ENCODE measurements at regions of chr2 and their contacts with region 1.

Region 1: GRCh38 chr2:134453476-134453875 is 199.6 kb downstream of the MGAT5 start:
- DNase-seq: no peak
- H3K4me3 Mint-ChIP-seq: no peak overlapping the region
- H3K27ac Mint-ChIP-seq: no peak overlapping the region
- H3K4me1 Mint-ChIP-seq: no peaks in the 10 kb centered on the region
- H3K27me3 Mint-ChIP-seq: no peaks in the 10 kb centered on the region

Region 2: DNA sequence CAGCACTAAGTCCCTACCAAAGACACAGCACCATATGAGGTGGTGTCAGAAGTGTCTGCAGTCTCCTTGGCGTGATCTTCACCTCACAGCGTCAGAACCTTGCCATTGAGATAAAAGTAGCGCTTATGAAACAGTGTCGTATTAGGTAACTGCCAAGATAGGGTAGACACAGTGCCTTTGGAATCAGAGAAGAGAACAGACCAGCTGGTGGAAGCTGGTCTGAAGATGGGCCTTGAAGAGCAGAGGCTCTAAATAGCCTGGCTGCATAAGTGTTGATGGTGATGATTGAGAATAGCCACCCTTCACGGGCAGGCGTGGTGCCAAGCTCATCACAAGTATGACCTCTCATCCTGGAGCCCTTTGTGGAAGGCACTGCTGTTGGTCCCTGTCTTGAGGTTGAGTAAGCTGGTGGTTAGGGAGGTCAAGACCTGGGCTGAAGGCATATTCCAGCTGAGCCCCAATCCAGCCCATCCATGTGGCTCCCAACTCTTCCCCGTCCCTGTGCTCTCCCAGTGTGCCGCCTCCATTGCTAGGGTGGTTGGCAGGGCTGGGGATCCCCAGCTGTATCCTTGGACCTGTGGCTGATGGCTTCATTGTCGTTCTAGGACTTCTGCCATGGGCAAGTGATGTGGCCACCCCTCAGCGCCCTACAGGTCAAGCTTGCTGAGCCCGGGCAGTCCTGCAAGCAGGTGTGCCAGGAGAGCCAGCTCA is 12.2 kb before region 1 on chr2:
- CTCF ChIA-PET with region 1: interaction called, 23 read pairs
- POLR2A ChIA-PET with region 1: no interaction called
- DNase-seq: no peak
- H3K4me3 Mint-ChIP-seq: no peak overlapping the region
- H3K27ac Mint-ChIP-seq: no peak overlapping the region
- H3K4me1 Mint-ChIP-seq: no peaks in the 10 kb centered on the region
- H3K27me3 Mint-ChIP-seq: no peaks in the 10 kb centered on the region

Measured in activated CD4-positive, alpha-beta memory T cell treated with anti-CD3 and anti-CD28 coated beads, Interleukin-2, amount 10 ng/mL, durations not matched to agents 7 days and 5 days (primary cell).